ENCODE measurements at regions of chr1 and their contacts with region 1.

Region 1: GRCh38 chr1:157580179-157580827 is 17.6 kb downstream of the FCRL4 start:
- DNase-seq: peak; percentile 13
- H3K4me3 ChIP-seq: no peak overlapping the region
- H3K27ac ChIP-seq: no peak overlapping the region
- H3K27me3 ChIP-seq: no peaks in the 10 kb centered on the region
- CTCF ChIP-seq: peak; percentile 71

Region 2: DNA sequence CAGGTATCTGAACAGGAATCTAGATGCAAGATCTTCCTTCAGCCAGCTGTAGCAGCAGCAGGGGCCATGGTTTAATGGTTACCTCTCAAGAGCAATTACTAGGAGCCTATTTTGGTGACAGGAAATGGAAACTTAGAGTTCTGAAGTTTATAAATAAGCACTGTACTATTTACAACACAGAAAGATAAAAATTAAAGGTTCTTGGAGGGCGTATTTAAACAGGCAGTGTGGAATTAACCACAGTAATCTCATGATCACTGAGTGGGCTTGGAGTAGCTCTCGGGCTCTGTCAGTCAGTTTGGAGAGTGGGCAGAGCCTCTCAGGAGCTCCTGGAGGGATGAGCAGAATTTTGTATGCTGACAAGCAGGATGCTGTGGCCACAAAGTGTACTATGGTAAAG is 17.8 kb before region 1 on chr1:
- CTCF ChIA-PET with region 1: interaction called, 19 read pairs
- POLR2A ChIA-PET with region 1: no interaction called
- DNase-seq: no peak
- H3K4me3 ChIP-seq: no peak overlapping the region
- H3K27ac ChIP-seq: no peak overlapping the region
- H3K27me3 ChIP-seq: no peaks in the 10 kb centered on the region
- CTCF ChIP-seq: no peak

Region 3: DNA sequence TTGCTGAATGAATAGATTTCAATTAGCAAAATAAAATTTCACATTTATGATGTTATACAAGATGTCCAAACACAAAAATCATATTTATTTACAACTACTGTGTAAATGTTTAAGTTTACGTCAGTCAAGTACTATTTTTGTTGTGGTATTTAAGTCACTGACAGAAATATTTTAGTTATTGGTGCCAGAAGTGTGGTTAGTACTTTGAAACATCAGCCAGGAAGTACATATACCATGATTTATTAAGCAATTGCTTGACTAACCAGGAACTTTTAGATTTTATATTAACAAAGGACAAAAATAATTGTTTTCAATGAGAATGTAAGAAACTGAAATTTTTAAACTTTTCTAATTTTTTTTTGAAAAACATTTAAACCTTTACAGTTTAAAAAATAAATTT is 19.9 kb after region 1 on chr1:
- CTCF ChIA-PET with region 1: interaction called, 15 read pairs
- POLR2A ChIA-PET with region 1: no interaction called
- DNase-seq: no peak
- H3K4me3 ChIP-seq: no peak overlapping the region
- H3K27ac ChIP-seq: no peak overlapping the region
- H3K27me3 ChIP-seq: no peaks in the 10 kb centered on the region
- CTCF ChIP-seq: no peak

Region 4: GRCh38 chr1:157691285-157691920 is 111.1 kb after region 1 on chr1:
- CTCF ChIA-PET with region 1: interaction called, 11 read pairs
- POLR2A ChIA-PET with region 1: no interaction called
- DNase-seq: no peak
- H3K4me3 ChIP-seq: no peak overlapping the region
- H3K27ac ChIP-seq: no peak overlapping the region
- H3K27me3 ChIP-seq: no peaks in the 10 kb centered on the region
- CTCF ChIP-seq: peak; percentile 55

Region 5: DNA sequence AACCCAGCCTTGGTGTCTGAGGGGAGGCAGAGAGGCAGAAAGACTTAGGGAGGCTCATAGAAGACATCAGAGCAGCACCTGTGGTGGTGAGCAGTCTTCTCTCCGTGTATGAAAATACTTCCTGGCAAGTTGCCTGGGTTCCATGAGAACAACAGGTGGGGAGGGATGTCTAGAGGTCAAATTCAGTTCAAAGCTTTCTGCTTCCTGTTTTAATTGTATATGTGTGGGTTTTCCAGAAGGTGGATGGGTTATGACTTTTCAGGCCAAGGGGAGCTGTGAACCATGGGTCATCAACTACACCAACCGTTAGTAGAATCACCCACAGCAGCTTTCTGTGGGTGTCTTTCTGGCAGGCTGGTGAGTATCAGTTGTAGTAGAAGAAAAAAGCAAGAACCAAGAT is 200.7 kb after region 1 on chr1:
- CTCF ChIA-PET with region 1: no interaction called
- POLR2A ChIA-PET with region 1: no interaction called
- DNase-seq: no peak
- H3K4me3 ChIP-seq: no peak overlapping the region
- H3K27ac ChIP-seq: no peak overlapping the region
- H3K27me3 ChIP-seq: no peaks in the 10 kb centered on the region
- CTCF ChIP-seq: no peak

Region 6: GRCh38 chr1:157948312-157949073 is 368.2 kb after region 1 on chr1:
- CTCF ChIA-PET with region 1: interaction called, 14 read pairs
- POLR2A ChIA-PET with region 1: no interaction called
- DNase-seq: no peak
- H3K4me3 ChIP-seq: no peak overlapping the region
- H3K27ac ChIP-seq: no peak overlapping the region
- H3K27me3 ChIP-seq: peaks cover 11% of the 10 kb centered on the region
- CTCF ChIP-seq: peak; percentile 63

Region 7: GRCh38 chr1:159250638-159251216 is 1670.4 kb after region 1 on chr1:
- CTCF ChIA-PET with region 1: no interaction called
- POLR2A ChIA-PET with region 1: no interaction called
- DNase-seq: no peak
- H3K4me3 ChIP-seq: no peak overlapping the region
- H3K27ac ChIP-seq: no peak overlapping the region
- H3K27me3 ChIP-seq: no peaks in the 10 kb centered on the region
- CTCF ChIP-seq: no peak

Measured in AG04450 (cell line).